ENCODE measurements at regions of chr15 and their contacts with region 1.

Region 1: DNA sequence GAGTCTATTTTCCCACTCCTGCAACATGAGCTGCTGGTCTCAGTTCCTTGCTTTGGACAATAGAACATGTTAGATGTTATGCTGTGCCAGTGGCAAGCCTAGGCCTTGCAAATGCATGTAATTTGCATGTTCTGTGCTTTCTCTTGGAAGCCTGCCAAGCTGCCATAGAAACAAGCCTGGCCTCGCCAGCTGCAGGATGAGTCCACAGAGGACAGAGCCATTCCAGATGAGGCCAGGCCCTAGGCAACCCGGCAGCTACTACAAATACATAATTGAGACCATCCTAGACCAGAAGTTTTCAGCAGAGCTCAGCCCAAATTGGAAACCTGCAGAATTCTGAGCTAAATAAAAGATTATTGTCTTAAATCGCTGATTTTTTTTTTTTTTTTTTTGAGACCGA is 39.6 kb downstream of the TRIM69 start:
- DNase-seq: no peak
- ATAC-seq: no peak
- H3K4me3 ChIP-seq: no peak overlapping the region
- H3K4me3 Mint-ChIP-seq: no peak overlapping the region
- H3K27ac ChIP-seq: no peak overlapping the region
- H3K27ac Mint-ChIP-seq: no peak overlapping the region
- H3K4me1 ChIP-seq: no peaks in the 10 kb centered on the region
- H3K4me1 Mint-ChIP-seq: peaks cover 3 to 6% (median 5%) of the 10 kb centered on the region in 3 donors
- H3K27me3 ChIP-seq: no peaks in the 10 kb centered on the region
- H3K27me3 Mint-ChIP-seq: no peaks in the 10 kb centered on the region

Region 2: DNA sequence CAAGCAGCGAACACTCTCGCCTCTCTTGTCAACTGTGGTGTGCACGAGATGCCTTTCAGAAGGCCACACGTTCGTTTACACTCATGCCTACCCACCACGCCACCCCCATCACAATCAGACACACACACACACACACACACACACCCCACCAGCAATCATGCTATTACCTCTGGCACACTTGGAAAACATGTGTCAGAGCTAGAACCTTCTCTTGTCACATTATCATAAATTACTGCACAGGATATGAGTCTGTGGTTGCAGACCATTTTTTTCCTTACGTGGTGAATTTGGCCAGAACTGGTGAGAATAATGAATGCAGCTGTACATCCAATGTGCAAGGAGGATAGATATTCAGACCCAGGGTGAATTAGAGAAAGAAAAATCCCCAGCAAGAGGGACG is 12.8 kb after region 1 on chr15:
- CTCF ChIA-PET with region 1: no interaction called
- POLR2A ChIA-PET with region 1: interaction called in 1 of 2 experiments, 14 read pairs
- DNase-seq: peak in 2 of 35 experiments; percentile 7 to 12
- ATAC-seq: no peak
- H3K4me3 ChIP-seq: no peak overlapping the region
- H3K4me3 Mint-ChIP-seq: no peak overlapping the region
- H3K27ac ChIP-seq: no peak overlapping the region
- H3K27ac Mint-ChIP-seq: no peak overlapping the region
- H3K4me1 ChIP-seq: peaks cover 0 to 11% of the 10 kb centered on the region in 2 experiments
- H3K4me1 Mint-ChIP-seq: peaks cover 8 to 15% (median 11%) of the 10 kb centered on the region in 3 donors
- H3K27me3 ChIP-seq: no peaks in the 10 kb centered on the region
- H3K27me3 Mint-ChIP-seq: no peaks in the 10 kb centered on the region

Region 3: GRCh38 chr15:44798826-44799225 is 22.9 kb after region 1 on chr15:
- CTCF ChIA-PET with region 1: no interaction called
- POLR2A ChIA-PET with region 1: no interaction called
- DNase-seq: no peak
- ATAC-seq: no peak
- H3K4me3 ChIP-seq: no peak overlapping the region
- H3K4me3 Mint-ChIP-seq: no peak overlapping the region
- H3K27ac ChIP-seq: no peak overlapping the region
- H3K27ac Mint-ChIP-seq: no peak overlapping the region
- H3K4me1 ChIP-seq: no peaks in the 10 kb centered on the region
- H3K4me1 Mint-ChIP-seq: no peaks in the 10 kb centered on the region
- H3K27me3 ChIP-seq: peaks cover 0 to under 1% of the 10 kb centered on the region in 2 experiments
- H3K27me3 Mint-ChIP-seq: peaks cover 4 to 5% of the 10 kb centered on the region in 2 donors

Region 4: GRCh38 chr15:44861439-44861910 is 85.5 kb after region 1 on chr15:
- CTCF ChIA-PET with region 1: no interaction called
- POLR2A ChIA-PET with region 1: interaction called in 1 of 2 experiments, 15 read pairs
- DNase-seq: no peak
- ATAC-seq: no peak
- H3K4me3 ChIP-seq: no peak overlapping the region
- H3K4me3 Mint-ChIP-seq: no peak overlapping the region
- H3K27ac ChIP-seq: no peak overlapping the region
- H3K27ac Mint-ChIP-seq: no peak overlapping the region
- H3K4me1 ChIP-seq: no peaks in the 10 kb centered on the region
- H3K4me1 Mint-ChIP-seq: no peaks in the 10 kb centered on the region
- H3K27me3 ChIP-seq: peaks cover 0 to 3% of the 10 kb centered on the region in 2 experiments
- H3K27me3 Mint-ChIP-seq: peaks cover under 1 to 8% of the 10 kb centered on the region in 2 donors